ENCODE measurements at regions of chr9 and their contacts with region 1.

Region 1: GRCh38 chr9:122099271-122099869 is 6.3 kb upstream of the TTLL11 start:
- DNase-seq: no peak
- H3K4me3 ChIP-seq: no peak overlapping the region
- CTCF ChIP-seq: peak; percentile 73

Region 2: GRCh38 chr9:122070728-122071505 is 28.5 kb before region 1 on chr9:
- CTCF ChIA-PET with region 1: interaction called, 10 read pairs
- POLR2A ChIA-PET with region 1: no interaction called
- DNase-seq: no peak
- H3K4me3 ChIP-seq: no peak overlapping the region
- CTCF ChIP-seq: no peak

Region 3: DNA sequence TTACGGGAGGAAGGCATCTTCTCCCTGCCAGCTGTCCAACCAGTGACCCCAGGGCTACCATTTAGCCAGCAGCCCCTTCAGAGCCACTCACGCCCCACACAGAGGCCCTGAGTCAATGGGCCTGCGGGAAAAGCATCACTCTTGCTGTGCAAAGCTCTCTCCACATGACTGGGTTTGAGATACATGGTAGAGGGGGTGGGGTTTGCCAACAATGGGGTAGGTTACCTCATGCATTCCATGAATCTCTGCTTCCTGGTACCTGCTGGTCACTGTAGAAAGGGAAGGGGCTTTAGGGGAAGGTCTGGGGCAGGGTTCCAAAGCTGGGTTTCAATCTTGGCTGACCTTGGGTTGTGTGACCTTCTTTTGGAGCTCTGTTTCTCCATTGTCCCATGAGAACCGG is 16.7 kb after region 1 on chr9:
- CTCF ChIA-PET with region 1: interaction called, 692 read pairs
- POLR2A ChIA-PET with region 1: no interaction called
- DNase-seq: no peak
- H3K4me3 ChIP-seq: no peak overlapping the region
- CTCF ChIP-seq: no peak

Region 4: GRCh38 chr9:122151267-122151828 is 52.0 kb after region 1 on chr9:
- CTCF ChIA-PET with region 1: interaction called, 19 read pairs
- POLR2A ChIA-PET with region 1: no interaction called
- DNase-seq: no peak
- H3K4me3 ChIP-seq: no peak overlapping the region
- CTCF ChIP-seq: no peak

Region 5: GRCh38 chr9:122197426-122197825 is 98.1 kb after region 1 on chr9:
- CTCF ChIA-PET with region 1: no interaction called
- POLR2A ChIA-PET with region 1: no interaction called
- DNase-seq: no peak
- H3K4me3 ChIP-seq: no peak overlapping the region
- CTCF ChIP-seq: no peak

Region 6: DNA sequence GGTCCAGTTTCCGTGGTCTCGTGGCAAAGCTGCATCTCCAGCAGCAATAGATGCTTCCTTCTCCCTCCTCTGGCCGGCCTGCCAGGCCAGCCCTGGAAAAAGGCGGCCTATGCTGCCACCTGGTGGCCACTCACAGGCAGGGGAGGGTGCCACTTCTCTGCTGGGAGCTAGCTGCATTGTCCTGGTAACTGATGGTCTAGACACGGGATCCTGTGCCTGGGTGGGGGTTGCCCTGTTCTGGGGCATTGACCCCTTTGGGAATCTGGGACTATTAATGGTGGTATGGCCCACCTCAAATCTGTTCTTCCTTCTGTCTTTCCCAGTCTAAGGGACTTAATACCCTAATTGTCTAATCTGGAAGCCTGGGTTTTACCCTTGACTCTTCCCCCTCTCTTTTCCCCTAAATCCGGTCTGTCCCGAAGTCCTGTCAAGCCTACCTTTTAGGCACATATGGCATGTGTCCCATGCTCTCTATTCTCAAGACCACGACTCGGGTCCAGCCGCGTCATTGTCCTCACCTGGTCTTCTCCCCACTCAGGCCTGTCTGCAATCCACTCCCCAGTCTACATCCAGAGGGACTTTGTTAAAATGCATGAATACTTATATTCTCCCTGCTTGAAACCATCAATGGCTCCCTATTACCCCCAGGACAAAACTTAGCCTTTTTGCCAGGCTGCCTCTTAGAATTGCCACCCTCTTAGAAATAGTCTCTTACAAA is 251.4 kb after region 1 on chr9:
- CTCF ChIA-PET with region 1: interaction called, 185 read pairs
- POLR2A ChIA-PET with region 1: no interaction called
- DNase-seq: no peak
- H3K4me3 ChIP-seq: no peak overlapping the region
- CTCF ChIP-seq: peak; percentile 95

Region 7: DNA sequence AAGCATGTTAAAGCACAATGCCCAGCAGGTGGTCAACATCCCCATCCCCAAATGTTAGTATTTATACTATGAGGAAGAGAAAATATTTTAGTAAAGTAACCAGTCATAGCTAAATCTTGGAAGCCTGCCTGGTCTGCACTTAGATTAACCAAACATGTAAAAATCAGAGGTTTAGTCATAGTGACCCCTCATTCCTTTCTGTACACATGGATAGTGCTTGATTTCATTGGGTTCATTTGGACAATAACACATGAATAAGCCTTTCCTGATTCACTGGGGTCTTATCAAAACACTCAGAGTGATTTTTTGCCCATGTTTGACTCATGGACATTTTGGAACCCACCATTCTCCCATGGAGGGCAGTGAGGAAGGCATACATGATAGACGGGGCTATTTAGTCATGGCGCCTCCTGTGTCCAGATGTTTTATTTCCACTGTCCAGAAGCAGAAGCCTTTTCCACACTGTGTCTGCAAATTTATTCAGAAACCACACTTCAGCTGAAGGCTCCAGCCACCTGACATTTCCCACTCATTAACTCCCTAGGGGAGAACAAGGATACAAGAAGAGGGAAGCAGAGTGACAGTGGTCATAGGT is 345.9 kb after region 1 on chr9:
- CTCF ChIA-PET with region 1: interaction called, 11 read pairs
- POLR2A ChIA-PET with region 1: no interaction called
- DNase-seq: peak; percentile 47
- H3K4me3 ChIP-seq: no peak overlapping the region
- CTCF ChIP-seq: no peak

Region 8: DNA sequence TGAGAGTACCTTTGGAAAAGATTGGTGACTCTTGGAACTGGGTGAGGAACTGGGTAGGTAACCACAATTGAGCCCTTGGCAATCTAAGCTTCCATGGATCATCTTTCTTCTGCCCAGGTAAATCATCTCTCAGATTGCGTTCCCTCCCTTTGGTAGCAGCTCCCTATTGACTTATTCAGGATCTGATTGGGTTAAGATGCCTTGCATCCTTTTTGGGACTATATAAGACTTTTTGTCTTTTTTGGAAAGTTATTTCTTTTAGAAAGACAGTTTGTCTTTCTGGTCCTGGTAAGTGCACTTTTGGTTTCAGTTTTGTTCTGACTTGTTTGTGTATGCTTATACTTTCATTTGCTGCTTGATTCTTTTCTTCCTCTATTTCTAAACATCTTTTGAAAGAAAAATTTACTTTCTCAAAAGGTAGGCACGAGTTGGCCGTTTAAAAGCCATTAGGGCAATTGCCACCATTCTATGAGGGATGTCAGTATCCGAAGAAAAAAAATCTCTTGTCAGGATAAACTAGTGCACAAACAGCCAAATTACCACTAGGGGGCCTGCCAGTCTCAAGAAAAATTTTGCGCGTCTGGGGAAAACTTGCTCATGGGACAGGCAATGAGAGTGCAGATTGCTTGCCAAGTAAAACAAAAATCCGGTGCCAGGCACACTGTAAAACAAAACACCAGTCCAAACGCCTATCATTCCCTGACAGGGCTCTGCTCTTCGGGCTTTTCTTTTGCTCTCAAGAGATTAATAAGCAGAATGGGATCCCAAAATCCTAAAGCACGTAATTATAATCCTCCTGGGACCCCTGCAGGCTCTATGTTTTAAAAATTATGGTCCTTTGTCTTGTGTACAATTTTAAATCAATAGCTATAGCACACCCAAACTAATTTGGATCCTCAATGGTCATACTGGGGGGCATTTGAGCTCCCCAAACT is 365.5 kb after region 1 on chr9:
- CTCF ChIA-PET with region 1: interaction called, 19 read pairs
- POLR2A ChIA-PET with region 1: no interaction called
- DNase-seq: peak; percentile 64
- H3K4me3 ChIP-seq: peak overlapping the region; percentile 47
- CTCF ChIP-seq: peak; percentile 66